Activated CD4-positive, alpha-beta T cell treated with anti-CD3 and anti-CD28 coated beads, Interleukin-2, amount 10 ng/mL, durations not matched to agents 24 days and 14 days (primary cell): ENCODE measurements at regions of chr9 and their contacts with region 1.

Region 1: GRCh38 chr9:34437006-34437925 is 21.1 kb downstream of the FAM219A start:
- DNase-seq: peak; percentile 89
- H3K4me3 Mint-ChIP-seq: no peak overlapping the region
- H3K27ac Mint-ChIP-seq: no peak overlapping the region
- H3K4me1 Mint-ChIP-seq: peaks cover 8% of the 10 kb centered on the region
- H3K27me3 Mint-ChIP-seq: no peaks in the 10 kb centered on the region

Region 2: DNA sequence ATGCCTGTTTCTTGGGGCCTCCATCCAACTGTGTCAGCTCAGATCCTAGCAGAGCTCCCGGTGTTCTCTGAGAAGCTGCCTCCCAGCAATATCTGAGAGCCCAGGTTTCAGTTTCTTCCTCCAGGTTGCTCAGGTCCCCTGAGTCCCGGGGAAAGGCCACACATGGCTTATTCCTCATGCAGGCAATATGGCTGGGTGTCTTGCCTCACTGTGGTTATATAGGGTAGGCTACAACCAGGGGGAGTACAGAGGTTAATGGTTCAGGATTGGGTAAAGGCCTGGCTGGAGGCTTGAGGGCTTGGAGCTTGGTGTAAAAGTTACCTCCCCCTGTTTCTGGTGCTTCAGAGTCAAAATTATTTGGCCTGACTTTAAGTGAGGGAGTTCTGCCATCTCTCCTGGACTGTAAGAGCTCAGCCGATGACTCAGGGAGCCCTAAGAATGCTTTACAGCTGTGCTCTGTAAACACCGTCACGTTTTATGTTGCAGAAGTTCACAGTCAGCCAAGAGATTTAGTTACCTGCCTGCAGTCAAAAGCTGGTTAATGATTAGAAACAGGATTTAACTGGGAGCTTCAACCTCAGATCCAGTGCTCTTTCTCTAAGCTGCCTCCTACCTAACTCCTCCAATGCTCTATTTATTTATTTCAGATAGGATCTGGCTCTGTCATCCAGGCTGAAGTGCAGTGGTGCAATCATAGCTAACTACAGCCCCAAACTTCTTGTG is 364.2 kb before region 1 on chr9:
- intact Hi-C with region 1: no loop called
- DNase-seq: no peak
- H3K4me3 Mint-ChIP-seq: no peak overlapping the region
- H3K27ac Mint-ChIP-seq: no peak overlapping the region
- H3K4me1 Mint-ChIP-seq: no peaks in the 10 kb centered on the region
- H3K27me3 Mint-ChIP-seq: peaks cover 1% of the 10 kb centered on the region

Region 3: DNA sequence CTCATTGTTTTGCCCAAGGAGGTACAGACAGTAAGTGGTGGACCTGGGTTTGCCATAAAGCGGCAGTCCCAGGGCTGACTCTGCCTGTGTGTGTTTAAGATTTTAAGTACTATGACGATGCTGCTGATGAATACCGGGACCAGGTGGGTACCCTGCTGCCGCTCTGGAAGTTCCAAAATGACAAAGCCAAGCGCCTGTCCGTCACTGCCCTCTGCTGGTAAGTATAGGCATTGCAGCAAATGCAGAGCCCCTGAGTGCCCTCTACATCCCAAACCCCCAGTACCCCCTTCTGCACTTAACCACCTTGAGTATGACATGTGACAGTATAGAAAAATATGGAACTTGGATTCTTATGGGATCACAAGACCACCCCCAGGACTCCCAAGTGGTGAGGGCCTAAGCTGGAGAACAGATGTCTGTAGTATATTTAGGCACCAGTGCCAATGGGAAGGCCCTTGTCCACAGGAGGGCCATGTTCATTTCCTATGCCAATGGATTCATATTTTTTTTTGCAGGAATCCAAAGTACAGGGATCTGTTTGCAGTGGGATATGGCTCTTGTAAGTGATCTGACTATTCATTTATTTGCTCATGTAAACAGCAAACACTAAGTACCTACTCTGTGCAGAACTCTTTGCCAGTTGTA is 63.5 kb after region 1 on chr9:
- intact Hi-C with region 1: loop called (anchors 1 kb)
- DNase-seq: peak; percentile 93
- H3K4me3 Mint-ChIP-seq: no peak overlapping the region
- H3K27ac Mint-ChIP-seq: no peak overlapping the region
- H3K4me1 Mint-ChIP-seq: peaks cover 6% of the 10 kb centered on the region
- H3K27me3 Mint-ChIP-seq: peaks cover 24% of the 10 kb centered on the region

Region 4: GRCh38 chr9:34546834-34547827 is 109.9 kb after region 1 on chr9:
- intact Hi-C with region 1: loop called (anchors 1 kb)
- DNase-seq: peak; percentile 80
- H3K4me3 Mint-ChIP-seq: no peak overlapping the region
- H3K27ac Mint-ChIP-seq: no peak overlapping the region
- H3K4me1 Mint-ChIP-seq: no peaks in the 10 kb centered on the region
- H3K27me3 Mint-ChIP-seq: peaks cover 12% of the 10 kb centered on the region

Region 5: GRCh38 chr9:34665381-34666250 is 228.3 kb after region 1 on chr9:
- intact Hi-C with region 1: no loop called
- DNase-seq: peak; percentile 97
- H3K4me3 Mint-ChIP-seq: peak overlapping the region; percentile 91
- H3K27ac Mint-ChIP-seq: peak overlapping the region; percentile 90
- H3K4me1 Mint-ChIP-seq: peaks cover 45% of the 10 kb centered on the region
- H3K27me3 Mint-ChIP-seq: no peaks in the 10 kb centered on the region